Psoas muscle (tissue), 8 donors: ENCODE measurements at regions of chr19 and their contacts with region 1.

Region 1: DNA sequence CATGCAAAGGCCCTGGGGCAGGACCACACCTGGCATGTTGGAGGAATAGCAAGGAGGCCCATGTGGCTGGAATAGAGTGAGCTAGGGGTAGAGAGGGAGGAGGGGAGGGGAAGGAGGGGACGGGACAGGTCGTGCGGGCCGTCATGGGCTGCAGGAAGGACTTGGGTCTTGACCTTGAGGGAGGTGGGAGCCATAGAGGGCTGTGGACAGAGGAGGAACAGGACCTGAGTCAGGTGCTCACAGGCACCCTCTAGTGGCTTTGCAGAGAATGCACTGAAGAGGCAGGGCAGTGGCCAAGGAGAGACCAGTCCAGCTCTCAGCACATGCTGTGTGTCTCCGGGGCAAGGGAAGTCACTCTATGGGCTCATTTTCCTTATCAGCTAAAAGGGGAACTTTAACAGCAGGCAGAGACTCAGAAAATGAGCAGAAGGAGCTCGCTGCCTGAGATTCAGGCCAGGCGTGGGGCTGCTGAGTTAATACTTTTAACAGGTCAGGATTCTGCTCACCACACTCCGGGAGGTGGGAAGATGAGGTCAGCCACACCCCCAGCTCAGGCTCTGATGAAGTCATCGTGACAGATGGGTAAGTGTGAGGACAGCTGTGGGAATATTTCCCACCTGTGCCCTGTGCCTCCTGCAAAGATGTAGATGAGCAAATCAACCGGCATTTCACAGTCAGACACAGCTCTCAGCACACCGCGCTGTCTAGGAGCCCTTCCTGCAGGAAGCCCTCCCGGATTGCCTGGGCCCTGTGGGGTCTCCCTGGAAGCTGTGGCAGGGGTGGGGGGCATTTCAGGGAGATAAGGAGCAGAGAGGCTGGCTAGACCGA is 6.0 kb upstream of the TNFAIP8L1 start:
- DNase-seq: peak; percentile 50 to 76
- ATAC-seq: peak; percentile 57 to 64 (median 63)
- H3K4me3 ChIP-seq: no peak overlapping the region
- H3K27ac ChIP-seq: peak overlapping the region; percentile 56
- H3K4me1 ChIP-seq: peaks cover 7% of the 10 kb centered on the region
- H3K27me3 ChIP-seq: peaks cover 0 to 3% (median 0%) of the 10 kb centered on the region in 3 donors
- CTCF ChIP-seq: peak; percentile 68

Region 2: DNA sequence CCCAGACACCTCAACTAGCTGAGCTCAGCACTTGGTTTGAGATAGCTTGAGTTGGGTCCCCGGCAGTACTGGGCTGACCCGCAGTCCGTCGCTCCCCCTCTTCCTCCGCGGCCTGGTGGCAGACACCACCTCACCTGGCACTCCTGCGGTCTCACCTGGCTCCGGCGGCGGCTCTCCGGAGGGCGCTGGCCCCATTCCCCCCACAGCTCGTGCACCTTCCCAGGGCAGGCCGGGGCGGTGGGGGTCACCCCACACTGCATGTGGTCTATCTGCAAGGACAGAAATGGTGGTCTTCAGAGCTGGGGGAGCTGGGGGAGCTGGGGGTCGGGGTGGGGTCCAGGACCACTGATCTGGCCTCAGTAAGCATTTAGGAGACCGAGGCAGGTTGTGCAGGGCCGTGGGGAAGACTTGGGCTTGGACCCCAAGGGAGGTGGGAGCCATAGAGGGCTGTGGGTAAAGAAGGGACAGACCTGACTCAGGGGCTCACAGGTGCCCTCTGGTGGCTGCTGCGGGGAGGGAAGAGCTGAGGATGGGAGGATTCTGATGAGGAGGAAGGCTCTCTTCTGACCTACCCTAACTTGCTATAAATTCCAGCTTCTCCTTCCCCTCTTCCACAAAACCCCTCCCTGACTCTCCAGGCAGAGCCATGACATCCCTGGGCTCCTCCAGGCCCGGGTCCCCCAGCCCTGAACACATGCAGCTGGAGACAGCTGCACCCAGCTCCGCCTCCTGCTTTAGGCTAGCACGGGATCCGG is 108.4 kb before region 1 on chr19:
- intact Hi-C with region 1: loop called in 1 of 2 experiments (anchors 1 kb)
- DNase-seq: peak; percentile 69 to 83
- ATAC-seq: peak; percentile 51 to 66 (median 64)
- H3K4me3 ChIP-seq: no peak overlapping the region
- H3K27ac ChIP-seq: no peak overlapping the region
- H3K4me1 ChIP-seq: no peaks in the 10 kb centered on the region
- H3K27me3 ChIP-seq: no peaks in the 10 kb centered on the region
- CTCF ChIP-seq: peak; percentile 58

Region 3: GRCh38 chr19:4576016-4576933 is 57.1 kb before region 1 on chr19:
- intact Hi-C with region 1: loop called (anchors 2 to 5 kb)
- DNase-seq: peak; percentile 70 to 80
- ATAC-seq: peak; percentile 59 to 78 (median 65)
- H3K4me3 ChIP-seq: no peak overlapping the region
- H3K27ac ChIP-seq: peak overlapping the region; percentile 69
- H3K4me1 ChIP-seq: no peaks in the 10 kb centered on the region
- H3K27me3 ChIP-seq: peaks cover 0 to 18% (median 9%) of the 10 kb centered on the region in 3 donors
- CTCF ChIP-seq: peak; percentile 70